HCT116 (cell line): ENCODE measurements at regions of chr6 and their contacts with region 1.

Region 1: DNA sequence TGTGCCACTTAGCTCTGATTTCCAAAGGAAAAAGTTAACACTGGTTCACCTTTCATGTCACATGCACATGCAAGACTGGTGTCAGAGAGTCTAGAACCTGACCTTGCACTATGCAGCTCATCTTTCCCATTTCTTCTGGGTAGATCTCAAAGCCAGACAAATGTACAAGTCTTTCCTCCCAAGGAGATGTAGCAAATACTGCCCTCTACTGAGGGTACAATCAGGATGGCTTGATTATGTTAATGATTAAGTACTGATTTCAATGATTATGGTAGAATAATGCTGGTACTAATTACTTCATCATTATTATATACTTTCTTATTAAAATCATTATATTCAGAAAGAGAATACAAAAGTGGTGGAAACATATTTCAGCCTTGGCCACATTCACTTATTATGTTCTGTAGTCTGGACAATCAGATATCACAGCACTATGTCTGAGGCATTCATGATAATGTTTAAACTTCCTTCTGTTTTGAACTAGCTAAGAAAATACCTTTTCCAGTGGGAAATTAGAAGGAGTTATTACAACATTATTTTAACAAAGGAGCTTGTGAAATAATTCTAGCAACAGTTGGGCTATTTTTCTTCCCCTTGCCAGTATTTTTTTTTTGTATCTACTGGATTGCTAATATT is 68.5 kb upstream of the FOXO3 start:
- DNase-seq: peak; percentile 36
- ATAC-seq: peak; percentile 89
- H3K4me3 ChIP-seq: no peak overlapping the region
- H3K27ac ChIP-seq: no peak overlapping the region
- H3K4me1 ChIP-seq: no peaks in the 10 kb centered on the region
- H3K27me3 ChIP-seq: no peaks in the 10 kb centered on the region
- CTCF ChIP-seq: peak; percentile 65 to 84 (median 67)
- POLR2A ChIP-seq: no peak
- RAD21 ChIP-seq: peak; percentile 89

Region 2: GRCh38 chr6:107977283-107977682 is 515.0 kb before region 1 on chr6:
- CTCF ChIA-PET with region 1: interaction called, 11 read pairs
- POLR2A ChIA-PET with region 1: no interaction called
- RAD21 ChIA-PET with region 1: no interaction called
- intact Hi-C with region 1: loop called (anchors 10 kb)
- DNase-seq: no peak
- ATAC-seq: peak; percentile 41; the same call in 1 of the 2 replicates
- H3K4me3 ChIP-seq: no peak overlapping the region
- H3K27ac ChIP-seq: no peak overlapping the region
- H3K4me1 ChIP-seq: no peaks in the 10 kb centered on the region
- H3K27me3 ChIP-seq: no peaks in the 10 kb centered on the region
- CTCF ChIP-seq: peak; percentile 39 to 62 (median 52); a peak in 4 of 6 replicates
- POLR2A ChIP-seq: no peak
- RAD21 ChIP-seq: peak; percentile 68

Region 3: DNA sequence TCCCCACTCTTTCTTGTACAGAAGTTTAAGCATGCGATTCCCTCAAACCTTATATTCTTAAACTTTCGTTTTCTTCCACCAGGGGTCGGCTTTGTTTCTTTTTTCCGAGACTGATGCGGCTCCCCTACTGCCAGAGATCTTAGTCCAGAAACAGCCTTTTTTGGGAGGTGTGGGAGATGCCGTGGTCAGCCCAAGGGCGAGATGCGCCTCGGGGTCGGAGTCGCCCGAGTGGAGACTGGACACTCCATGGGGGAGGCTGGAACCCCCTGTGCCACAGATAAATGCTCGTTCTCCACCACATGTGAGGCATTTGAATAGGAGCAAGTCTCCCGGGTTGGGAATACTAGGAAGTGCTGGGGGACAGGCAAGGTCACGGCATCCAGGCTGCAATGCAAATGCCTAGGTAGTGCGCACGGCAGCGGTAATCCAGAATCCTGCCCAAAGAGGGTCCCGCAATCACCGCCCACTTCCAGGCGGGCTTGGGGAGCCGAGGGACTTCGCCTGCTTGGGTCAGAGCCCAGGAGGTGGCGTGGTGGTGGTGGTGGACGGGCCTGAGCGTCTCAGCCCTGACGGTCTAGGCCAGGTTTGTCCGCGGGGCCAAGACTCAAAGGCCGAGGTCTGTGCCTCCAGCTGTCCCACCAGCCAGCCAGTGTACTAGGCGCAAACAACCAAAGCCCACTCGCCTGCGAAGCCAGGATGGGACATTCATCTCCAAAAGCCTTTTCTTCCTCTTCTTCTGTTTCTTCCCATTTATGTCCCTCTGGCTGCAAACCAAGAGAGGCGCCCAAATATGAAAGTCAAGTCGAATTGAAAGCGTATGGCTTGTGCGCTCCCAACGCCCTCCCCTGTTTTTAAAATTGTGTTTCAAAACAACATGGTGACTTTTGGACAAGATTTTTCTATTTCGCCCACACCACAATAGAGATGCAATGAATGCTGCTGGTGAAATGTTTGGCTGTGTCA is 378.4 kb before region 1 on chr6:
- CTCF ChIA-PET with region 1: interaction called, 38 read pairs
- POLR2A ChIA-PET with region 1: no interaction called
- RAD21 ChIA-PET with region 1: no interaction called
- intact Hi-C with region 1: loop called (anchors 1 kb)
- DNase-seq: peak; percentile 35
- ATAC-seq: peak; percentile 76
- H3K4me3 ChIP-seq: no peak overlapping the region
- H3K27ac ChIP-seq: no peak overlapping the region
- H3K4me1 ChIP-seq: no peaks in the 10 kb centered on the region
- H3K27me3 ChIP-seq: no peaks in the 10 kb centered on the region
- CTCF ChIP-seq: peak; percentile 37 to 86 (median 63); a peak in 5 of 6 replicates
- POLR2A ChIP-seq: no peak
- RAD21 ChIP-seq: peak; percentile 89

Region 4: GRCh38 chr6:108250240-108250866 is 241.9 kb before region 1 on chr6:
- CTCF ChIA-PET with region 1: interaction called, 10 read pairs
- POLR2A ChIA-PET with region 1: no interaction called
- RAD21 ChIA-PET with region 1: no interaction called
- intact Hi-C with region 1: loop called (anchors 1 kb)
- DNase-seq: peak; percentile 28
- ATAC-seq: peak; percentile 73
- H3K4me3 ChIP-seq: no peak overlapping the region
- H3K27ac ChIP-seq: no peak overlapping the region
- H3K4me1 ChIP-seq: no peaks in the 10 kb centered on the region
- H3K27me3 ChIP-seq: no peaks in the 10 kb centered on the region
- CTCF ChIP-seq: peak in 2 of 3 experiments; percentile 38 to 49; a peak in 4 of 6 replicates
- POLR2A ChIP-seq: no peak
- RAD21 ChIP-seq: peak; percentile 41

Region 5: DNA sequence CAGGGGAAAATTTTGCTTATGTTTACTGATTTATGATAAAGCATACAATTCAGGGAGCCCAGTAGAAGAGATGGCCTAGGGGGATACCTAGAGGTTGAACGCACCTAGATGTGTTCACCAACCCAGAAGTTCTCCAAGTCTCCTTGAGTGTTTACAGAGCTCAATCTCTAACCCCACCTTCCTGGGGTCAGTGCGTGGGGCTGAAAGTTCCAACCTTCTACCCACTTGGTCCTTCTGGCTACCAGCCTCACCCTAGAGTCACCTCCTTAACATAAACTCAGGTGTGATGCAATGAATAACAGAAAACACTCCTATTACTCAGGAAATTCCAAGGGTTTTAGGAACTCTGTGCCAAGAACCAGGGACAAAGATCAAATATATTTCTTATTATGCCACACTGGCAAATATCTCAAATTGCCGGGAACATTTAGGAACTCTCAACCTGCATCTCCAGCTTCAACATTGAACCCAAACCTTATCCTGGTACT is 171.0 kb before region 1 on chr6:
- CTCF ChIA-PET with region 1: no interaction called
- POLR2A ChIA-PET with region 1: no interaction called
- RAD21 ChIA-PET with region 1: no interaction called
- intact Hi-C with region 1: no loop called
- DNase-seq: no peak
- ATAC-seq: no peak
- H3K4me3 ChIP-seq: no peak overlapping the region
- H3K27ac ChIP-seq: no peak overlapping the region
- H3K4me1 ChIP-seq: no peaks in the 10 kb centered on the region
- H3K27me3 ChIP-seq: no peaks in the 10 kb centered on the region
- CTCF ChIP-seq: no peak
- POLR2A ChIP-seq: no peak
- RAD21 ChIP-seq: no peak

Region 6: GRCh38 chr6:108476847-108477430 is 15.3 kb before region 1 on chr6:
- CTCF ChIA-PET with region 1: interaction called, 16 read pairs
- POLR2A ChIA-PET with region 1: no interaction called
- RAD21 ChIA-PET with region 1: no interaction called
- intact Hi-C with region 1: no loop called
- DNase-seq: no peak
- ATAC-seq: no peak
- H3K4me3 ChIP-seq: no peak overlapping the region
- H3K27ac ChIP-seq: no peak overlapping the region
- H3K4me1 ChIP-seq: no peaks in the 10 kb centered on the region
- H3K27me3 ChIP-seq: no peaks in the 10 kb centered on the region
- CTCF ChIP-seq: no peak
- POLR2A ChIP-seq: no peak
- RAD21 ChIP-seq: no peak

Region 7: DNA sequence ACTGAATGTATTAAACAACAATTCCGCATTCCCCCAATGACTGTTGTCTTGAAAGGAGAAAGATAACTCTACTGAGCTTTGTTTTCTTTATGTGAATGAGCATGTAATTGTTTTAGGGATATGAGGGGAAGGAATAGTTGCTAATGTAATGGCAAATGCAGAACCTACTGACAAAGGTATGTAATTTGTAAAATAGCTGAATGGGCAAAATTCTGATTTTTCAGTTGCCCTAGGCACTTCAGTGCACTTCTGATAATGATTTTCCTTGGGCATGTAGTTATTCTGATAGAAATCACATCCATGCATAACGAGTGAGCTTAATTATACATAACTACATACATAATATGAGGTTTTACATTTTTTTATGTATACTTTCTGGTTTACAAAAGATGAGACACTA is 15.1 kb after region 1 on chr6:
- CTCF ChIA-PET with region 1: interaction called, 10 read pairs
- POLR2A ChIA-PET with region 1: no interaction called
- RAD21 ChIA-PET with region 1: no interaction called
- intact Hi-C with region 1: no loop called
- DNase-seq: no peak
- ATAC-seq: no peak
- H3K4me3 ChIP-seq: no peak overlapping the region
- H3K27ac ChIP-seq: no peak overlapping the region
- H3K4me1 ChIP-seq: no peaks in the 10 kb centered on the region
- H3K27me3 ChIP-seq: no peaks in the 10 kb centered on the region
- CTCF ChIP-seq: no peak
- POLR2A ChIP-seq: no peak
- RAD21 ChIP-seq: no peak